ENCODE measurements at regions of chr4 and their contacts with region 1.

Region 1: DNA sequence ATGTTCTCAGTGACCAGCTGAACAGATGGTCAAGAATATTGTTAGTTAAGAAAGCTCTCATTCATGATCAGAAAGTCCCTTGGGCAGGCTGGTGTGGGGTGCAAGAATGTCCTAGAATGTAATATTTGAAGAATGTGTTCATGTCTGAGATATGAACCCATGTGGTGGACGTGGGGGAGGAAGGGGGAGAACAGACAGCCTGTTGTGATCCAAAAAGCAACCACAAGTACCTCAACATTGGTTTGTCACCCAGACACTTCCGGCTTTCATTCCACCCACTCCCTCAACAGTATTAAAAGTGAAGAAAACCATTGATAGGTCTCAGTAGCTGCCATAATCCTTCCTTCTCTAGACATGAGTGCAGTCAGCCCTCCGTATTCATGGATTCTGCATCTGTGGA is 82.2 kb downstream of the MAML3 start:
- DNase-seq: peak in 34 of 35 experiments; percentile 27 to 81 (median 57)
- ATAC-seq: peak; percentile 86 to 95 (median 94)
- H3K4me3 ChIP-seq: no peak overlapping the region
- H3K4me3 Mint-ChIP-seq: peak overlapping the region; percentile 70 to 78 (median 71)
- H3K27ac ChIP-seq: no peak overlapping the region
- H3K27ac Mint-ChIP-seq: peak overlapping the region; percentile 84 to 90
- H3K4me1 ChIP-seq: peaks cover 36 to 43% of the 10 kb centered on the region in 2 experiments
- H3K4me1 Mint-ChIP-seq: peaks cover 47 to 59% (median 51%) of the 10 kb centered on the region in 3 donors
- H3K27me3 ChIP-seq: no peaks in the 10 kb centered on the region
- H3K27me3 Mint-ChIP-seq: no peaks in the 10 kb centered on the region

Region 2: GRCh38 chr4:140172960-140173359 is 101.2 kb after region 1 on chr4:
- CTCF ChIA-PET with region 1: no interaction called
- POLR2A ChIA-PET with region 1: interaction called in 1 of 2 experiments, 11 read pairs
- DNase-seq: no peak
- ATAC-seq: no peak
- H3K4me3 ChIP-seq: no peak overlapping the region
- H3K4me3 Mint-ChIP-seq: no peak overlapping the region
- H3K27ac ChIP-seq: no peak overlapping the region
- H3K27ac Mint-ChIP-seq: no peak overlapping the region
- H3K4me1 ChIP-seq: no peaks in the 10 kb centered on the region
- H3K4me1 Mint-ChIP-seq: no peaks in the 10 kb centered on the region
- H3K27me3 ChIP-seq: peaks cover 0 to 2% of the 10 kb centered on the region in 2 experiments
- H3K27me3 Mint-ChIP-seq: peaks cover 0 to 5% of the 10 kb centered on the region in 2 donors

Region 3: GRCh38 chr4:140296335-140297220 is 224.8 kb after region 1 on chr4:
- CTCF ChIA-PET with region 1: no interaction called
- POLR2A ChIA-PET with region 1: no interaction called
- DNase-seq: no peak
- ATAC-seq: no peak
- H3K4me3 ChIP-seq: no peak overlapping the region
- H3K4me3 Mint-ChIP-seq: no peak overlapping the region
- H3K27ac ChIP-seq: no peak overlapping the region
- H3K27ac Mint-ChIP-seq: no peak overlapping the region
- H3K4me1 ChIP-seq: no peaks in the 10 kb centered on the region
- H3K4me1 Mint-ChIP-seq: no peaks in the 10 kb centered on the region
- H3K27me3 ChIP-seq: no peaks in the 10 kb centered on the region
- H3K27me3 Mint-ChIP-seq: peaks cover 8% of the 10 kb centered on the region in 2 donors